ENCODE measurements at regions of chr17 and their contacts with region 1.

Region 1: DNA sequence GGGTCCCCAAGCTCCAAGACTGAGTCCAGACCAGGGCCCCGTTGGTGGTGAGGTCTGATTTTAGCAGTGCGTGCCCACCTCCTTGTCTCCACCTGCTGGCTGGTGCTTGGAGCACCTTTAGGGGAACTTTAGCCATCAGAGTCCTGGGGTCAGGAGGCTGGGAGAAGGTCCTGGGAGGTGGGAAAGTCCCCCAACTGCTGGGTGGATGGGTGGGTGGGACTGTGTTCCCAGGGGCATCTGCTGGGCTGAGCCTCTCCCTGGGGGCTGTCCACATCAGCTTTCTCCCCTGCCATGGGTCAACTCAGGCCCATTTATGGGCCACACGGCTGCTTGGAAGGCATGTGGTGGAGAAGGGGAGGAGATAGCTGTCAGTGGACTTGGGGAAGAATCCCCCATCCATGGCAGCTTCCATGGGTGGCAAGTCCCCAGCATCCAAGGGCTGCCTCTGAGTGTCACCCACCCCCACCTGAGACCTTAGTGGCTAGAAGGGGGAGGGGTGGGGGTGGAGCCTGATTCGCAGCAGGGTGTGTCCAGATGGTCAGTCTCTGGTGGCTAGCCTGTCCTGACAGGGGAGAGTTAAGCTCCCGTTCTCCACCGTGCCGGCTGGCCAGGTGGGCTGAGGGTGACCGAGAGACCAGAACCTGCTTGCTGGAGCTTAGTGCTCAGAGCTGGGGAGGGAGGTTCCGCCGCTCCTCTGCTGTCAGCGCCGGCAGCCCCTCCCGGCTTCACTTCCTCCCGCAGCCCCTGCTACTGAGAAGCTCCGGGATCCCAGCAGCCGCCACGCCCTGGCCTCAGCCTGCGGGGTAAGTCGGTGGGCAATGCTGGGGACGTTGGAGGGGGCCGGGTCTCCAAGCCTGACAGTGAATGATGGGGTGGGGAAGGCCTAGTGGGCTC is at the start of gene TRPV2:
- DNase-seq: peak; percentile 51
- ATAC-seq: peak; percentile 41
- H3K4me3 Mint-ChIP-seq: peak within 1 kb of the TSS; percentile 95
- H3K27ac Mint-ChIP-seq: peak within 1 kb of the TSS; percentile 97
- H3K4me1 Mint-ChIP-seq: peaks cover 41% of the 10 kb centered on the region
- H3K27me3 Mint-ChIP-seq: no peaks in the 10 kb centered on the region
- CTCF ChIP-seq: no peak
- total RNA-seq, gene TRPV2: 58.3 and 65.8 TPM in 2 replicates

Region 2: DNA sequence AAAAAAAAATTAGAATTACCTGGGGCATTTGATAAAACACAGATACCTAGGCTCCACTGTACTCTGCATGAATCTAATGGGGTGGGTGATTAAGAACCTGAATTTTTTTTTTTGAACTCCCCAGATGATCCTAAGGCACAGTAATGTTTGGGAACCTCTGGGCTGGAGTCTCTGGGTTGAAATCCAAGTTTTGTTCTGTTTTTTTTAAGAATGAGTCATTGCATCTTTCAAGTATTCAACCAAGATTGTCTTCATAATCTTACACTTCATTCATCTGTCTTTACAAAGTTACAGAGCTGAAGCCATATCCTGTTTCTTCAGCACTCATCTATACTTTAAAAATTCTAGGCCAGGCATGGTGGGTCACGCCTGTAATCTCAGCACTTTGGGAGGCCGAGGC is 145.6 kb before region 1 on chr17:
- CTCF ChIA-PET with region 1: no interaction called
- POLR2A ChIA-PET with region 1: interaction called, 10 read pairs
- intact Hi-C with region 1: no loop called
- DNase-seq: no peak
- ATAC-seq: no peak
- H3K4me3 Mint-ChIP-seq: no peak overlapping the region
- H3K27ac Mint-ChIP-seq: no peak overlapping the region
- H3K4me1 Mint-ChIP-seq: peaks cover 33% of the 10 kb centered on the region
- H3K27me3 Mint-ChIP-seq: no peaks in the 10 kb centered on the region
- CTCF ChIP-seq: no peak

Region 3: GRCh38 chr17:16428098-16428882 is 13.0 kb after region 1 on chr17:
- CTCF ChIA-PET with region 1: interaction called, 16 read pairs
- POLR2A ChIA-PET with region 1: interaction called, 20 read pairs
- intact Hi-C with region 1: no loop called
- DNase-seq: no peak
- ATAC-seq: peak; percentile 89
- H3K4me3 Mint-ChIP-seq: no peak overlapping the region
- H3K27ac Mint-ChIP-seq: peak overlapping the region; percentile 30
- H3K4me1 Mint-ChIP-seq: no peaks in the 10 kb centered on the region
- H3K27me3 Mint-ChIP-seq: no peaks in the 10 kb centered on the region
- CTCF ChIP-seq: no peak

Measured in activated B cell treated with CpG ODN at 0.5 μM for 24 hours (primary cell).